Activated CD4-positive, alpha-beta T cell treated with anti-CD3 and anti-CD28 coated beads, Interleukin-2, amount 10 ng/mL, durations not matched to agents 24 days and 14 days (primary cell): ENCODE measurements at regions of chr19 and their contacts with region 1.

Region 1: GRCh38 chr19:12757544-12758274 is 6.1 kb downstream of the BEST2 start:
- DNase-seq: peak; percentile 93
- H3K4me3 Mint-ChIP-seq: peak overlapping the region; percentile 75
- H3K27ac Mint-ChIP-seq: no peak overlapping the region
- H3K4me1 Mint-ChIP-seq: peaks cover 8% of the 10 kb centered on the region
- H3K27me3 Mint-ChIP-seq: peaks cover 8% of the 10 kb centered on the region

Region 2: GRCh38 chr19:12716861-12717260 is 40.8 kb before region 1 on chr19:
- intact Hi-C with region 1: loop called (anchors 1 kb)
- DNase-seq: peak; percentile 85
- H3K4me3 Mint-ChIP-seq: no peak overlapping the region
- H3K27ac Mint-ChIP-seq: peak overlapping the region; percentile 62
- H3K4me1 Mint-ChIP-seq: peaks cover 26% of the 10 kb centered on the region
- H3K27me3 Mint-ChIP-seq: no peaks in the 10 kb centered on the region